Naive thymus-derived CD4-positive, alpha-beta T cell (primary cell): ENCODE measurements at regions of chr9 and their contacts with region 1.

Region 1: DNA sequence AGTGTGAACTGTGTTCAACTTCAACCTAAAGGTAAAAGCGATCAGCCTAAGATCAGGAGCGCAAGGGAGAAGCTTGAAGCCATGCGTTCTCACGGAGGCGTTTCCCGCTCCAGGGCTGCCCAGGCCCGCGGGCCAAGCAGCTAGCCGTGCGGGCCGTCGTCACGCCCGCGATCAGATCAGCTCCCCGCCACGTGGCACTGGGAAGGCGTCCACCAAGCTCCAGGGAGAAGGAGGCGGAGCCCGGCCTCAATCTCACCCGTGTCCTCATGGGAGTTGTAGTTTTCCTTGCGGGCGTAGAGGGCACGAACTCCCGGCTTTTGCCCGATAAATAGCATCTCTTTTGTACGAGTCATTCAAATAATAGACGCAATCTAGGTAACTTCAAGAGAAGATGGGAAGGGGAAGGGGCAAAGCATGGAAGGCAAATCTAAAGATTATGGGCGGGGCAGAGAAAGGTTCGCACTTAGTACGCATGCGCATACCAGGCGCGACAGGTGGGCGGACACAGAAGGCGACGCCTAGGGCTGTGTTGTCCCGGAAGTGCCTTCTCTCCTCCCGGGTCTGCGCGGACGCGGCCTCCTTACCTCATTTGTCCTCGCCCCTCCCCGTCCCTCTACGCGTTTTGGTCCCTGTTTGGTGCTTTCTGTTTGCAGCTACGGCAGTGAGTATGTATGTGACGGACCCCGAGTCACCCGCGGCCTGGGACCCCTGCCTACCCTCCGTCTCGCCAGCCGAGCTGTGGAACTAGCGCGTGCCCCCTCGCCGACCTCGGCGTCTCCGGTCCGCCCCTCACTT is 40.8 kb upstream of the ZCCHC7 start:
- DNase-seq: peak; percentile 72 to 96 (median 94)
- ATAC-seq: peak; percentile 98
- H3K4me3 ChIP-seq: peak overlapping the region; percentile 67
- H3K4me3 Mint-ChIP-seq: peak overlapping the region; percentile 89 to 98 (median 95)
- H3K27ac ChIP-seq: peak overlapping the region; percentile 99
- H3K27ac Mint-ChIP-seq: peak overlapping the region; percentile 76 to 99 (median 97)
- H3K4me1 ChIP-seq: peaks cover 14 to 15% of the 10 kb centered on the region in 2 donors
- H3K4me1 Mint-ChIP-seq: peaks cover 33 to 56% (median 41%) of the 10 kb centered on the region in 7 donors
- H3K27me3 ChIP-seq: no peaks in the 10 kb centered on the region
- H3K27me3 Mint-ChIP-seq: peaks cover 0 to 10% (median 3%) of the 10 kb centered on the region in 5 donors

Region 2: DNA sequence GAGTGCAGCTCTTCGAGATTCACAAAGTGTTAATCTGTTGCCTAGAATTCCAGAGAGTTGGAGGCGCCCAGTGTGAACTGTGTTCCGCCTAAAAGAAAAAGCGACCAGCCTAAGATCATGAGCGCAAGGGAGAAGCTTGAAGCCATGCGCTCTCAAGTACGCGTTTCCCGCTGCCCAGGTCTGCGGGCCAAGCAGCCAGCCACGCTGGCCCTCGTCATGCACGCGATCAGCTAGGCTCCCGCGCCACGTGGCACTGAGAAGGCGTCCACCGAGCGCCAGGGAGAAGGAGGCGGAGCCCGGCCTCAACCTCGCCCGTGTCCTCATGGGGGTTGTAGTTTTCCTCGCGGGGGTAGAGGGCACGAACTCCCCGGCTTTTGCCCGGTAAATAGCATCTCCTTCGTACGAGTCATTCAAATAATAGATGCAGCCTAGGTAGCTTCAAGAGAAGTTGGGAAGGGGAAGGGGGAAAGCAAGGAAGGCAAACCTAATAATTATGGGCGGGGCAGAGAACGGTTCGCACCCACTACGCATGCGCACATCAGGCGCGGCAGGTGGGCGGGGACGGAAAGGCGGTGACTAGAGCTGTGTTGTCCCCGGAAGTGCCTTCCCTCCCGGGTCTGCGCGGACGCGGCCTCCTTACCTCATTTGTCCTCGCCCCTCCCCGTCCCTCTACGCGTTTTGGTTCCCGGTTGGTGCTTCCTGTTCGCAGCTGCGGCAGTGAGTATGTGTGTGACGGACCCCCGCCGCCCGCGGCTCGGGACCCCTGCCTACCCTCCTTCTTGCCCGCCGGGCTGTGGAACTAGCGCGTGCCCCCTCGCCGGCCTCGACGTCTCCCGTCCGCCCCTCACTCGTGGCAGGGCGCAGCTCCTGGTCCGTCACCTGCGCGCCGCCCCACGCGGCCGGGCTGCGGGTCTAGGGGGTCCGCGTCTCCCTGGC is 40.6 kb after region 1 on chr9 and contains the start of gene ZCCHC7:
- CTCF ChIA-PET with region 1: interaction called, 3 read pairs
- POLR2A ChIA-PET with region 1: interaction called, 68 read pairs
- intact Hi-C with region 1: loop called (anchors 1 kb)
- DNase-seq: peak; percentile 95 to 99 (median 98)
- ATAC-seq: peak; percentile 97
- H3K4me3 ChIP-seq: peak within 1 kb of the TSS; percentile 93
- H3K4me3 Mint-ChIP-seq: peak within 1 kb of the TSS; percentile 88 to 99 (median 96)
- H3K27ac ChIP-seq: peak within 1 kb of the TSS; percentile 100
- H3K27ac Mint-ChIP-seq: peak within 1 kb of the TSS; percentile 93 to 100 (median 97)
- H3K4me1 ChIP-seq: peaks cover 11 to 25% of the 10 kb centered on the region in 2 donors
- H3K4me1 Mint-ChIP-seq: peaks cover 16 to 42% (median 32%) of the 10 kb centered on the region in 7 donors
- H3K27me3 ChIP-seq: no peaks in the 10 kb centered on the region
- H3K27me3 Mint-ChIP-seq: no peaks in the 10 kb centered on the region
- total RNA-seq, gene ZCCHC7: 26.1 to 47.1 (median 40.9) TPM

Region 3: GRCh38 chr9:37197158-37198038 is 117.8 kb after region 1 on chr9:
- CTCF ChIA-PET with region 1: no interaction called
- POLR2A ChIA-PET with region 1: no interaction called
- intact Hi-C with region 1: loop called in 1 of 2 experiments (anchors 5 kb)
- DNase-seq: peak in 4 of 9 donors; percentile 5 to 17 (median 14)
- ATAC-seq: peak; percentile 58
- H3K4me3 ChIP-seq: no peak overlapping the region
- H3K4me3 Mint-ChIP-seq: peak overlapping the region in 9 of 10 donors; percentile 12 to 72 (median 46)
- H3K27ac ChIP-seq: peak overlapping the region; percentile 22
- H3K27ac Mint-ChIP-seq: peak overlapping the region in 7 of 9 donors; percentile 2 to 93 (median 49)
- H3K4me1 ChIP-seq: peaks cover 0 to 19% of the 10 kb centered on the region in 2 donors
- H3K4me1 Mint-ChIP-seq: peaks cover 39 to 68% (median 59%) of the 10 kb centered on the region in 7 donors
- H3K27me3 ChIP-seq: no peaks in the 10 kb centered on the region
- H3K27me3 Mint-ChIP-seq: no peaks in the 10 kb centered on the region

Region 4: GRCh38 chr9:37302277-37302676 is 222.7 kb after region 1 on chr9:
- CTCF ChIA-PET with region 1: no interaction called
- POLR2A ChIA-PET with region 1: no interaction called
- intact Hi-C with region 1: loop called (anchors 2 to 5 kb)
- DNase-seq: peak in 7 of 9 donors; percentile 26 to 64 (median 54)
- ATAC-seq: peak; percentile 88
- H3K4me3 ChIP-seq: no peak overlapping the region
- H3K4me3 Mint-ChIP-seq: peak overlapping the region; percentile 64 to 78 (median 74)
- H3K27ac ChIP-seq: no peak overlapping the region
- H3K27ac Mint-ChIP-seq: peak overlapping the region; percentile 34 to 89 (median 71)
- H3K4me1 ChIP-seq: peaks cover 25 to 37% of the 10 kb centered on the region in 2 donors
- H3K4me1 Mint-ChIP-seq: peaks cover 31 to 70% (median 58%) of the 10 kb centered on the region in 7 donors
- H3K27me3 ChIP-seq: no peaks in the 10 kb centered on the region
- H3K27me3 Mint-ChIP-seq: no peaks in the 10 kb centered on the region